ENCODE measurements at regions of chr7 and their contacts with region 1.

Region 1: DNA sequence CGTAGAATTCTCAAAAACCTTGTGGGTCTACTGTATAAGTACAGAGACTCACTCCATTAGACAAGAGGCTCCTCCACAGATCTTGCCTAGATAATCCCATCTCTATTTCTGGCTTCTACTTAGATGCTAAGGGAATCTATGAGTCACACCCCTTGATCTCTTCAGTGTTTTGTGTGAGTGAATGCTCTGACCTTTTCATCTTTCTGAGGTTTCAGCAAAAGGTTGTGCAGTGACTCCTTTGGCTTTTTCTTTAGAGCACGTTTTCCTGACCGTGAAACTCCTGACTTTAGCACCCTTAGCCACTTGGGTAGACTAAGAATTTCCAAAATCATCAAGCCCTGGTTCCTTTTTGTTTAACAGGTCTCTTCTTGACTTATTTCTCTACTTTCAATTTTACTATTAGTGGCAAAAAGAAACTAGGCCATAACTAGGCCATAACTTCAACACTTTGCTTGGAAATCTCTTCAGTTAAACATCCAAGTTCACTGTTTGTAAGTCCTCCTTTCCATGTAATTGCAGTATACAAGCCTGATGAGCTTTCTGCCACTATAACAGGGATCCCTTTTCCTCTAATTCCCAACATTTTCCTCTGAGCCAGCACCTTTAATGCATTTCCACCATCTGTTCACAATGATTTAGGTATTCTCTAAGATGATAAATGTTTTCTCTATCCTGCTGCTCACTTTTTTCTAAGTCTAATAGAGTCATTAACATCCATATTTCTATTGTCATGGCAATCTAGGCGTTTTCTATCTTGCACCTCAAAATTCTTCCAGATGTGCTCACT is 19.4 kb downstream of the COPG2 start:
- DNase-seq: peak; percentile 5
- H3K4me3 Mint-ChIP-seq: peak overlapping the region; percentile 54
- H3K27ac Mint-ChIP-seq: peak overlapping the region; percentile 85
- H3K4me1 Mint-ChIP-seq: peaks cover 40% of the 10 kb centered on the region
- H3K27me3 Mint-ChIP-seq: no peaks in the 10 kb centered on the region

Region 2: GRCh38 chr7:129530795-129531391 is 1118.3 kb before region 1 on chr7:
- intact Hi-C with region 1: loop called (anchors 2 kb)
- DNase-seq: peak; percentile 8
- H3K4me3 Mint-ChIP-seq: no peak overlapping the region
- H3K27ac Mint-ChIP-seq: peak overlapping the region; percentile 79
- H3K4me1 Mint-ChIP-seq: peaks cover 12% of the 10 kb centered on the region
- H3K27me3 Mint-ChIP-seq: no peaks in the 10 kb centered on the region

Region 3: DNA sequence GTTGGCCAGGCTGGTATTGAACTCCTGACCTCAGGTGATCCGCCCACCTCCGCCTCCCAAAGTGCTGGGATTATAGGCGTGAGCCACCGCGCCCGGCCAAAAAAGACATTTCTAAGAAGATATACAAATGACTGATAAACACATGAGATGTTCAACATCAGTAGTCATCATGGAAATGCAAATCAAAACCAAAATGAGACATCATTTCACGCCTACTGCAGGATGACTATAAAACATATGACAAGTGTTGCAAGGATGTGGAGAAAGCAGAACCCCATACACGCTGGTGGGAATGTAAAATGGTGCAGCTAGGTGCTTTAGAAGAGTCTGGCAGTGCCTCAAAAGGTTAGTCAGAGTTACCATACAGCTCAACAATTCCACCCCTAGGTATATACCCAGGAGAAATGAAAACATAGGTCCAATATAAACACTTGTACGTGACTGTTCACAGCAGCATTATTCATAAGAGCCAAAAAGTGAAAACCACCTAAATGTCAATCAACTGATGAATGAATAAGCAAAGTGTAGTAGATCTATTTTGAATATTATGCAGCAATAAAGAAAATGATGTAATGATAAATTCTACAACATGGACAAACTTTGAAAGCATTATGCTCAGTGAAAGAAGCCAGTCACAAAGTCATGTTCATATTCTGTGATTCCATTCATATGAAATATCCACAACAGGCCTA is 468.5 kb before region 1 on chr7:
- intact Hi-C with region 1: loop called (anchors 2 kb)
- DNase-seq: no peak
- H3K4me3 Mint-ChIP-seq: peak overlapping the region; percentile 15
- H3K27ac Mint-ChIP-seq: peak overlapping the region; percentile 92
- H3K4me1 Mint-ChIP-seq: peaks cover 36% of the 10 kb centered on the region
- H3K27me3 Mint-ChIP-seq: no peaks in the 10 kb centered on the region

Region 4: DNA sequence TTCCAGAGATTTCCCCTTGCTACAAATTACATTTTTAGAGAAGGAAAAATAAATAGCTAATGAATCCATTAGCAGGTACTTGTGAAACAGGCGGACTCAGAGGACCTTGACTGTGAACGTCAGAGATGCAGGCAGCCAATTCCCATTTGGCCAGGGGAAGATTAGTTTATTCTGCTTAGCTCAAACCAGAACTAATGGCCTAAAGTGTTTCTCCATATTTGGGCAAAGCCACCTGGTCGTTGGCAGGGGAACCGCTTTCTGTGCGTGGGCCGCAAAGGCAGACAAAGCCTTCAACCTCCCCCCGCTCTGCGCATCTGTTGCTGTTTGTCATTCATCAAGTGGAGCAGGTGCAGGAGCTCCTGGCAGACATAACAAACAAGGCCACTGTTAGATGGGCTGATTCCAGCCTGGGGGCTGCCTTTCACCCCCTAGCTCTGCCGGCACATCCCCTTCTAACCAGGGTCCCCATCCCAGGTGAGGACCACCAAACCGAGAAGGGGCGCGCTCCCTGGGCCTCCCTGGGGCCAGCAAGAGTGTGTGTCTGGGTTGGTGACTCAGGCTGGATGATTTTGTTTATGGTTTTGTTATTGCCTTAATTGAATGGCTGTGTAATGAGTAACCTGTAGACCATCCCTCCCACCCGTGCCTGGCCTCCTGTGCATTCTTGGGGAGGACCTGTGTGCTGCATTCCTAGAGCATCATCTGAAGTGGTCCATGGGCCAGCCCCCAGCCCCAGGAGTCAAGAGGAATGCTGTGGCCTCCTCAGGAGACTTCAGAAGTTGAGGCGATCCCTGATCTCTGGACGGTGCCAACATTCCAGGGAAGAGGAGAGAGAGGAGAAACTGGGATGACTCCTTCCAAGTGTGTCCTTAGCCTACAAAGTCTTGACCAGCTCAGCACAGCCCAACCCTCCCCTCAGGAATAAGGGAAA is 283.4 kb before region 1 on chr7:
- intact Hi-C with region 1: loop called (anchors 1 kb)
- DNase-seq: no peak
- H3K4me3 Mint-ChIP-seq: no peak overlapping the region
- H3K27ac Mint-ChIP-seq: no peak overlapping the region
- H3K4me1 Mint-ChIP-seq: peaks cover 33% of the 10 kb centered on the region
- H3K27me3 Mint-ChIP-seq: no peaks in the 10 kb centered on the region

Region 5: DNA sequence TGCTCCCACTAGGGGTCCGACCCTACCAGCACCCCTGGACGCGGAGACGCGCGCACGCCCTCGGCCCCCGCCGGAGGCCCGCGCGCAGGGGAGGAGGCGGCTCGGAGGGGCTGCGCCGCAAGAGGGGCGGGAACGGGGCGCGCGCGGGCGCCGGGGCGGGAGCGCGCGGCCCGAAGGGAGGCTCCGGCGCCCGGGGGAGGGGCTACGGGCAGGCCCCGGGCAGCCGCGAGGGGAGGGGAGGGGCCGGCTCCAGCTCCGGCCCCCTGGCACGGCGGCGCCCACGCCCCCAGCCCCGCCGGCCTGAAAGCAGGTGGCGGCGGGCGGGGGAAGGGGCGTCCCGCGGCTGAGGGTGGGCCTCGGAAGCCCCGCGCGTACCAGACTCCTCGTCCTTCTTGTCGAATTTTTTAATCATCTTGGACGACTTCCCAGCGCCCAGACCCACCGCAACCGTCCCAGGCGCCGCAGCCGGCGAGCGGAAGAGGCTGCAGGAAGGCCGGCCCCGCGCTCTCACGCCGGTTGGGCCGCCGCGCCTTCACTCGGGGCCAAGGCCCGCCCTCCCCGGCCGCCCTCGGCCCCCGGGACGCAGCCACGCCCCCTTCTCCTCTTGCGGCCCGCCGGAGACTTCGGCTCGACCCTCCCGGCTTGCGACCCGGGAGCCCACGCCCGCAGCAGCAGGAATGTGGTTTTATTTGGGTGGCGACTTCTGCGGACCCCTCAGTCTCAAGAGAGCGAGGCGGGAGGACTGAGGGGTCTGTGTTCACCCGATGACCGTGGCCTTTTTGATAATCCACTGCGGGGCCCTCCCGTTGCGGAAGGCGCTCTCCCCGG is 19.3 kb after region 1 on chr7 and contains the start of gene COPG2:
- intact Hi-C with region 1: loop called (anchors 1 kb)
- DNase-seq: peak; percentile 76
- H3K4me3 Mint-ChIP-seq: peak within 1 kb of the TSS; percentile 88
- H3K27ac Mint-ChIP-seq: peak within 1 kb of the TSS; percentile 41
- H3K4me1 Mint-ChIP-seq: peaks cover 22% of the 10 kb centered on the region
- H3K27me3 Mint-ChIP-seq: no peaks in the 10 kb centered on the region
- total RNA-seq, gene COPG2: 19.3 and 20.9 TPM in 2 replicates

Region 6: DNA sequence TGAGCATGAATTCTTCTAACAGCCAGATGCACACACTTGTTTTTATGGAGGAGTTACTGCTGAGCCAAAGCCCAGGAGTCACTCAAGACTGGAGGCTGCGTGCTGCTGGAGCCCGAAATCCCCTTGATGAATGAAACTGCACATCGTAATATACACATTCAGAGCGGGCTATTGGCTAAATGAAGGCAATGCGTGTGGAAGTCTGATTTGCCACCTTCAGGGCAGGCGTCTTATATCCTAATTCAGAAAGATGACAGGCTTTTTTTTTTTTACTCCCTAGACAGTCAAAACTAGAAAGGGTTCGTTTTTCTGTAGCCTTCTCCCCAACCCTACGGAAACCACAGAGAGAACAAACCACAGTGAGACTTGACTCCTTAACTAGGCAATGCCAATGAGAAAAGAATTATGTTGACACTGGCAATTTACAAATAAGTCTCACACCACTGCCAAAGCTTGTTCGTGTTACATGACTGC is 312.0 kb after region 1 on chr7:
- intact Hi-C with region 1: loop called (anchors 1 kb)
- DNase-seq: peak; percentile 83
- H3K4me3 Mint-ChIP-seq: peak overlapping the region; percentile 92
- H3K27ac Mint-ChIP-seq: peak overlapping the region; percentile 98
- H3K4me1 Mint-ChIP-seq: peaks cover 29% of the 10 kb centered on the region
- H3K27me3 Mint-ChIP-seq: no peaks in the 10 kb centered on the region

Region 7: GRCh38 chr7:131107337-131108211 is 458.4 kb after region 1 on chr7:
- intact Hi-C with region 1: loop called (anchors 2 kb)
- DNase-seq: peak; percentile 75
- H3K4me3 Mint-ChIP-seq: peak overlapping the region; percentile 99
- H3K27ac Mint-ChIP-seq: peak overlapping the region; percentile 100
- H3K4me1 Mint-ChIP-seq: peaks cover 65% of the 10 kb centered on the region
- H3K27me3 Mint-ChIP-seq: no peaks in the 10 kb centered on the region

Region 8: DNA sequence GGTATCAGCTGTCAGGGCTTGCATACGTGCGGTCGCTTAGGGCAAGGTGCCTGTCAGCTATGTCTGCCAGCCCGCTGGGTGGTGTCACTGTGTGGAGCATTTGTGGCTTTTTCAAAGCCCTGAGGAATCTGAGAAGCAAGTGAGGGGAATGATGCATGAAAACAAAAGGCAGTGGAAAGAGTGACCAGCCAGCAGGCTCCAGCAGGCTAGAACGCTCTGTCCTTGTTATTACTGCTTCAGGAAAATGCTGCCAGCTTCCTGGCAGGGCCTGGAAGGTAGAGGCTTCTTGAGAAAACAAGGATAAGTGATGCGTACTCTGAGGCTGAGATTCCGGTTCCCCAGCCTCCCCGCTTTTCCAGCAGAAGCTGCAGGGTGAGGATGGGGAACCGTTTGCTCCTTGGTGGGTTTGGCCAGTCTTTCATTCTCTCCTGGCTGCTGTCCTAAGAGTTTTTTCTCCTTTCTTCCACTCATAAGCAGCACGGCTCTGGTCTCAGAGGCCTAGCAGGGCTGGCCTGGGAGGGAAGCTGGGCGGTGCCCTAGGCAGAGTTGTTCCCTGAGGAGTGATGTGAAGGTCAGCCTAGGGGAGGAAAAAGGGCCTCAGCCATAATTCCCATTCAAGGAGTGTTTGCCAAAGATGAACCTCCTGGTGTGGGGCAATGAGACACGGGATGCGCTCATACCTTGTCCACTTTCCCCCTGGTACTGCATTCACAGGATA is 635.7 kb after region 1 on chr7:
- intact Hi-C with region 1: no loop called
- DNase-seq: no peak
- H3K4me3 Mint-ChIP-seq: no peak overlapping the region
- H3K27ac Mint-ChIP-seq: no peak overlapping the region
- H3K4me1 Mint-ChIP-seq: no peaks in the 10 kb centered on the region
- H3K27me3 Mint-ChIP-seq: peaks cover 3% of the 10 kb centered on the region